OCI-LY7 (cell line): ENCODE measurements at regions of chr12 and their contacts with region 1.

Region 1: DNA sequence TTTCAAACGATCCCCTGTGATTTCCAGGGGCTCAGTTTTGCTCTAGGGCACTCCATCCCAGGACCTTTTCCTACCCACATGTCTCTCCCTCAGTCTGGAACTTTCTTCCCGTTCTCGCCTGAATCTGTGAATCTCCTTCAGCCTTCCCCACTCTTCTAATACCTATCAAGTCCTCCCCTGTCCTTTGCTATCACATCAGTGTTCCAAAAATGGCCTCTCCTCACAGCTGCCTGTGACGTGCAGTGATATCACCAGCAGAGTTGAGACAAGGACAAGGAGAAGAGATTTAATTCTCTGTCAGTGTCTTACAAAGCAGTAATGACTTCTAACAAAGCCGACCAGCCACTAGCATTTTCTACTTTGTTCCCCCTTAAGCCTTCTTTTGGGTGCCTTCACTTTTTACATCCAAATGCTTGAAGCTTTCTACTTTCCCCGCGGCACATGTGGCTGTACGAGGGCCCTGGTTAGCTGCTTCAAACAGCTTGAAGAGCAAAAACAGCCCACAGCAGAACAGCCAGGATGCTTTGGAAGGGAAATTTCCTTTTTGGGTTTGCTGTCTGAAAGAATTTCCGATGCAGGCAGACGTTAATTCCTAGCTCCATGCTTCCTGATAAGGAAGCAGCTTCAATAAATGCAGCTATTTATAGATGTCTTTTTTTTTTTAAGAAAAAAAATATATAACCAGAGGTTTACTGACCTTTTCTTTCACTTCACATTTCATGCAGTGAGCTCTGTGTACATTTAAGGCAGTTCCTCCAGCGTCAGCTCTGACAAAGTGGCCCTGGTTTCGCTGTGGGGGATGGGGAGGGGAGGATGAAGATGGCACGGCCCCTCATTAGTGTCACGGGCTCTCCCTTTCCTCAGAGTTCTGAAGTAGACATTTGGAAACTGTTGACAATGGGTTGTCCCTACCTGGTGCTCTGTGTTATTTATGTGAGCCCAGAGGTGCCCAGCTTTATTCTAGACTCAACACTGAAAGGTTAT is 109.3 kb downstream of the ETV6 start:
- DNase-seq: peak; percentile 82
- H3K4me3 ChIP-seq: peak overlapping the region; percentile 49
- H3K27ac ChIP-seq: peak overlapping the region; percentile 100
- H3K4me1 ChIP-seq: peaks cover 100% of the 10 kb centered on the region
- CTCF ChIP-seq: no peak

Region 2: GRCh38 chr12:11724888-11725311 is 33.9 kb before region 1 on chr12:
- CTCF ChIA-PET with region 1: interaction called, 6 read pairs
- POLR2A ChIA-PET with region 1: interaction called, 201 read pairs
- intact Hi-C with region 1: no loop called
- DNase-seq: no peak
- H3K4me3 ChIP-seq: peak overlapping the region; percentile 1
- H3K27ac ChIP-seq: peak overlapping the region; percentile 91
- H3K4me1 ChIP-seq: peaks cover 85% of the 10 kb centered on the region
- CTCF ChIP-seq: no peak

Region 3: DNA sequence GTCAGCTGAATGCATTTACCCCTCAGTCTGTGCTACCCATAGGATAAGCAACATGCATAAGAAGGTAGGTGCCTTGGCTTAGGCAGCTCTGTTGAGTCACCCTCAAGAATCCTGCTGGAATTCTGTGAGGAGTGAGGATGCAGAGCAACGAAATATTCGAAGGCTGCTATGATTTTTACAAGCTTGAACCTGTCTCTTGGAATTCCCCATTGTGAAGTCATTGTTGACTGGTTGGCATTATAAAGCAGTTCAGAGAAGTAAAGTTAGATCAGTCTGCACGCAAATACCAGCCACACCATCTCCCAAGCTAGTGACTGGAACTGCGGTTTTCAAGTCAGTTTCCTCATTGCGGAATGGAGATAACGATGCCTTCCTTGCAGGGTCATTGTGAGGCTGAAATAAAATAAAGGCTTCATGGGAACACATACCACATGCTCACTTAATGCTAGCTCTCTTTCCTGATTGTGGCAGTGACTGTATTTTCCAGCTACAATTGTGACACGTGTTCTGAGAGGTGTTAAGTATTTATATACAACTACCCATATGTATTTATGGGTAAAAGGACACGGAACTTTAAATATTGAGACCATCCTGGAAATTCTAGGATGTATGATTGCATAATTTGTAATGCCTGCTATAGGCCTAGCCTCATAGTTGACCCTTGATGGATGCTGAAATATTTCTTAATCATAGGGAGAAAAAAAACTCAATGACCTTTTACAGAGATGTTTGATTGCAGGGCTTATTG is 12.6 kb before region 1 on chr12:
- CTCF ChIA-PET with region 1: interaction called, 12 read pairs
- POLR2A ChIA-PET with region 1: interaction called, 119 read pairs
- intact Hi-C with region 1: no loop called
- DNase-seq: peak; percentile 51
- H3K4me3 ChIP-seq: no peak overlapping the region
- H3K27ac ChIP-seq: peak overlapping the region; percentile 100
- H3K4me1 ChIP-seq: peaks cover 100% of the 10 kb centered on the region
- CTCF ChIP-seq: no peak

Region 4: GRCh38 chr12:11836282-11837151 is 77.7 kb after region 1 on chr12:
- CTCF ChIA-PET with region 1: interaction called, 3 read pairs
- POLR2A ChIA-PET with region 1: interaction called, 9 read pairs
- intact Hi-C with region 1: loop called (anchors 2 kb)
- DNase-seq: peak; percentile 95
- H3K4me3 ChIP-seq: peak overlapping the region; percentile 37
- H3K27ac ChIP-seq: peak overlapping the region; percentile 91
- H3K4me1 ChIP-seq: peaks cover 72% of the 10 kb centered on the region
- CTCF ChIP-seq: 0 out of 2 replicates have a peak, but pooled peaks have one; percentile 8

Region 5: GRCh38 chr12:12019881-12020280 is 261.1 kb after region 1 on chr12:
- CTCF ChIA-PET with region 1: no interaction called
- POLR2A ChIA-PET with region 1: interaction called, 4 read pairs
- intact Hi-C with region 1: loop called (anchors 2 kb)
- DNase-seq: no peak
- H3K4me3 ChIP-seq: no peak overlapping the region
- H3K27ac ChIP-seq: no peak overlapping the region
- H3K4me1 ChIP-seq: peaks cover 63% of the 10 kb centered on the region
- CTCF ChIP-seq: no peak

Region 6: GRCh38 chr12:12356886-12357718 is 598.3 kb after region 1 on chr12 and contains the start of gene BORCS5:
- CTCF ChIA-PET with region 1: no interaction called
- POLR2A ChIA-PET with region 1: no interaction called
- intact Hi-C with region 1: loop called (anchors 10 kb)
- DNase-seq: peak; percentile 99
- H3K4me3 ChIP-seq: peak within 1 kb of the TSS; percentile 81
- H3K27ac ChIP-seq: peak within 1 kb of the TSS; percentile 82
- H3K4me1 ChIP-seq: peaks cover 18% of the 10 kb centered on the region
- CTCF ChIP-seq: peak; percentile 55
- total RNA-seq, gene BORCS5: 9.6 and 10.4 TPM in 2 replicates